Left ventricle myocardium superior (tissue), 1 donor: ENCODE measurements at regions of chr10 and their contacts with region 1.

Region 1: DNA sequence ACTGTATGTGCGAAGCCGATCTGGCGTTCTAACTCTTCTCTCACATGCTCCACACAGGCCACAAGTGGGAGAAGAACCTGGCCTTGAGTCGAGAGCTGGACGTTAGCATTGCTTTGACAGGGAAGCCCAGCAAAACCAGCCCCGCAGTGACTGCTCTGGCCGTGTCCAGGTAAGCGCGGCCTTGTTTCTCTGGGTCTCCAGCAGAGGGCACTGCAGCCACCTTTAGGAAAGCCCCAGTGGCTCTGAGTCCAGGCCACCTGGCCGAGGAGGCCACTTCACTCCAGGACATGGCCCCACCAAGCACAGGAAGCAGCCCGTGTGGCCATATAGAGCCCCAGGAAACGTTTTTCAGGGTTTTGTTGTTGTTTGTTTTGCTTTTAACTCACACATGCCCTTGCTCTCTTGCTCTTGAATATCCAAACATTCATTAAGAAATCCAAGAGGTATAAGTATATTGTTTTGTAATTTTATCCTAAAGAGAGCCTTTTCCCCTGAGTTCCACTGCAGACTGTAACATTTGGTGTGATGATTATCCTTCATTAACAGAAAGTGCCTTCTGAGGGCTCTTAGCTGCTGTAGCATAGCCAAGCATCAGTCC is 41.8 kb upstream of the LRRC18 start:
- DNase-seq: peak; percentile 72
- ATAC-seq: peak; percentile 93

Region 2: DNA sequence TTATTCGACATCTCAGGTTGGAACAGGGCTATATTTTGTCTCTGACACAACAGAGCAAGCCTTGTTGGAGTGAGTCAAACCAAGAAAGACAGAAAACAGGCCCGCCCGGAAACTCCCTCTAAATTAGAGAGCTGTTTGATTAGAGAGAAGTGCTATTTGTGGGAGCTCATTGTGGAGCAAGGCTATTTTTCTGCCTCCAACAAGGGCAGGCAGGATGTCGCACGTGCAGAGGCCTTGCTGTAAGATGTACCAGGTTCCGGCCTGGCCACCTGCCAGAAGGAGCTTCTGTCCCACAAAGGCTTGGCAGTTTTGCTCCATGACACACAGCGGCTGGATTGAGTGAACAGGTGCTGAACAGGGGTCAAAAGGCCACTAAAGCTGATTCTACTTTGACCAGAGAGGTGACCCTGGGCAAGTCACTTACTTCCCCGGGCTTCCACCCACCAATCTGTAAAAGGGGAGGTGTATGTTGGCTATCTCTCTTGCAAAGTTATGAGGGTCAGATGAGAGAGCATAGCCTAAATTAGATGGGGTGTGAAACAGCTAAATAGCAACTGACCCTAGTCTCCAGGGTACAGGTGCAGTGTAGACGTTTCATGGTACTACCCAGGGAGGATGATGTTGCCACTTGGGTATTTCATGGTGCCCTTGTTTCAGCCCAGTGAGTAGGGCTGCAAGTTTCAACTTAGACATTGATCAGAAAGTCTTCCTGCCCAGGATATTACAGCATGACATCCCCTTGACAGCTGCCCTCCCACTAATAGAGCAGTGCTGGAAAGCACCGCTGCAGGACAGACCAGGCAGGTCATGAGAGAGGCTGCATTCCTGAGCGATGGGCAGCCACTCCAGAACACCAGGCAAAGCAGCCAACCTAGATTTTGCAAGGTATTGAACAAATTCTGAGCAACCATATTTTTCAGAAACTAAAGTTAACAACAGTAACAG is 71.9 kb after region 1 on chr10:
- intact Hi-C with region 1: no loop called
- DNase-seq: peak; percentile 71
- ATAC-seq: peak; percentile 73

Region 3: DNA sequence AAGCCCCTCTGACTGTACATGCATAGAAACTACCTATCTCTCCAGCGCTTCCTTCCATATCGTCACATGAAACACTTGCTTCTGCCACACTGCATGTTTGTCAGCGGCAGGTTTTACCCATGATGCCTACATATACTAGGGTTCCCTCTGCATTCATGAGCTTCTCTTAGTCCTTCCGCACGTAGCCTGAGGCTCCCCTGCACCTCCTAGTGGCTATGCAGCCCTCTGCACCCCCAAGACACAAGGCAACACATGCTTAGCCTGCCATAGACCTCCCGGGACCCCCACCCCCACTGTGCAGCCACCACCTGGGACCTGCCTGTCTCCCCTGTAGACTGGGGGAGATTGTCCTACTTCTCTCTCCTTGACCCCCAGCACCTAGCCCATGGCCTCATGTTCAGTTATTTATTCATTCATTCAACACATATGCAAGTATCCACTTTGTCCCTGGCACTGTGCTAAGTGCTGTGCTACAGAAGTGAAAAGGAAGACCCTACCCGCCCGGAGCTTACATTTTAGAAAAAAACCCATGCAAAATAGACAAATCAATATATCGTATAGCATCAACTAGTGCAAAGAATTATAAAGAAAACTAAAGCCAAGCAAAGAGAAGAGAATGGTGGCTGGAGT is 183.3 kb after region 1 on chr10:
- intact Hi-C with region 1: loop called (anchors 5 kb)
- DNase-seq: peak; percentile 62
- ATAC-seq: peak; percentile 76

Region 4: GRCh38 chr10:49187950-49188761 is 206.7 kb after region 1 on chr10 and contains the start of gene TMEM273:
- intact Hi-C with region 1: no loop called
- DNase-seq: peak; percentile 88
- ATAC-seq: peak; percentile 97
- total RNA-seq, gene TMEM273: 17.6 TPM